PC-9 (cell line): ENCODE measurements at regions of chr5 and their contacts with region 1.

Region 1: DNA sequence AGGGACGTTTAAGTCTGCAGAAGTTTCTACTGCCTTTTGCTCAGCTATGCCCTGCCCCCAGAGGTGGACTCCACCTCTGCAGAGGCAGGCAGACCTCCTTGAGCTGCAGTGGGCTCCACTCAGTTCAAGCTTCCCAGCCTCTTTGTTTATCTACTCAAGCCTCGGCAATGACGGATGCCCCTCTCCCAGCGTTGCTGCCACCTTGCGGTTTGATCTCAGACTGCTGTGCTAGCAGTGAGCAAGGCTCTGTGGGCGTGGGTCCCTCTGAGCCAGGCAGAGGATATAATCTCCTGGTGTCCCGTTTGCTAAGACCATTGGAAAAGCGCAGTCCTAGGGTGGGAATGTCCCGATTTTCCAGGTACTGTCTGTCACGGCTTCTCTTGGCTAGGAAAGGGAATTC is 2188.5 kb upstream of the WWC1 start:
- DNase-seq: no peak
- H3K4me3 ChIP-seq: no peak overlapping the region
- H3K27ac ChIP-seq: no peak overlapping the region
- H3K4me1 ChIP-seq: no peaks in the 10 kb centered on the region
- H3K27me3 ChIP-seq: no peaks in the 10 kb centered on the region
- CTCF ChIP-seq: peak; percentile 39; the same call in 1 of the 2 replicates

Region 2: GRCh38 chr5:166083183-166083959 is 19.6 kb before region 1 on chr5:
- CTCF ChIA-PET with region 1: no interaction called
- POLR2A ChIA-PET with region 1: no interaction called
- intact Hi-C with region 1: loop called (anchors 1 kb)
- DNase-seq: no peak
- H3K4me3 ChIP-seq: no peak overlapping the region
- H3K27ac ChIP-seq: no peak overlapping the region
- H3K4me1 ChIP-seq: no peaks in the 10 kb centered on the region
- H3K27me3 ChIP-seq: no peaks in the 10 kb centered on the region
- CTCF ChIP-seq: no peak

Region 3: DNA sequence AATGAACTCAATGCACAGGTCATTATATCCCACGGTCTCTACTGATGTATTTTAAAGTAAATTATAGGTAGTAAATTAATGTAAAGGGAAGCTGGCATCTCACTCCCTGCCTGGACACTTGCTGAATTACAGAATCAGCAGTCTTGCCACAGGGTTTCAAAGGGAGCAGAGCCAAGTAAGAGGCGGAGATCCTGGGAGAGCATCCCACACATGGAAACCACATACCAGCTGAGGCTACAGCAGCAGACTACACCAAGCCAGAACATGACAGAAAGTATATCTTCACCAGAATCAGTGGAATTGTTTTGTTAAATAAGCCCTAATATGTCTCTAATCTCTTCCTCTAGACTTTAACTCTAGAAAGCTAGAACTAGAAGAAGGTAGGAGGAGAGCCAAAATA is 499.3 kb after region 1 on chr5:
- CTCF ChIA-PET with region 1: no interaction called
- POLR2A ChIA-PET with region 1: no interaction called
- intact Hi-C with region 1: no loop called
- DNase-seq: no peak
- H3K4me3 ChIP-seq: no peak overlapping the region
- H3K27ac ChIP-seq: no peak overlapping the region
- H3K4me1 ChIP-seq: no peaks in the 10 kb centered on the region
- H3K27me3 ChIP-seq: no peaks in the 10 kb centered on the region
- CTCF ChIP-seq: no peak